ENCODE measurements at regions of chr6 and their contacts with region 1.

Region 1: DNA sequence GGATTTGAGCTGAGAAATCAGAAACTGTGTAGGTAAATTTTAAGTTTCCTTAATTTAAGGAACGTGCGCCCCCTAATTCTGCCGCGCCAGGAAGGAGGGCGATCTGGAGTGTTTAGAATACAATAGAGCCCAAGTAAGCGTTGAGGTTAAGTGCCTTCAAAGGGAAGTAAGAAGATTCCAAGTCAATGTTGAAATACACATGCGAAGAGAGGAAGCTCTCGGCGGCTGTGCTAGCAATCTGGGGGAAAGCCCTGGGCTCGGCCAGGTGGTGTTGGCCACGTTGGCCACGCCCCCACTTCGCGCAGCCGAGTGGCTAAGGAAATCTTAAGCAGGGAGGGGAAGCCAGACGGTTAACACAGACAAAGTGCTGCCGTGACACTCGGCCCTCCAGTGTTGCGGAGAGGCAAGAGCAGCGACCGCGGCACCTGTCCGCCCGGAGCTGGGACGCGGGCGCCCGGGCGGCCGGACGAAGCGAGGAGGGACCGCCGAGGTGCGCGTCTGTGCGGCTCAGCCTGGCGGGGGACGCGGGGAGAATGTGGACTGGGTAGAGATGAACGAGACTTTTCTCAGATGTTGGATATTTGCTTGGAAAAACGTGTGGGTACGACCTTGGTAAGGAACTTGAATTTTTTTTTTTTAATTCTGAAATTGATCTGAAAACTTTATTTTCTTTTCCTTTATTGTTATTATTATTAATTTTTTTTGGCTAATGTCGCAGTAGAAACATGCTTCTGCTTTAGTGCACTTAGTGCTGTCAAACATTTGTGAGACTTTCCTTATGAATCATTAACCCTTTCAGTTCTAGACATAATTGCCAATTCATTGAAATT is at the start of gene PRDM1:
- DNase-seq: peak; percentile 96
- total RNA-seq, gene PRDM1: 2.0 TPM

Region 2: GRCh38 chr6:105992315-105992961 is 93.8 kb before region 1 on chr6:
- intact Hi-C with region 1: loop called (anchors 5 kb)
- DNase-seq: peak; percentile 95